Left cardiac atrium (tissue), 4 donors: ENCODE measurements at regions of chr1 and their contacts with region 1.

Region 1: GRCh38 chr1:32215629-32216480 is 6.3 kb downstream of the TMEM234 start:
- DNase-seq: peak; percentile 62
- ATAC-seq: peak; percentile 73 to 81

Region 2: GRCh38 chr1:32316903-32317277 is 101.0 kb after region 1 on chr1:
- intact Hi-C with region 1: loop called in 1 of 2 experiments (anchors 5 kb)
- DNase-seq: no peak
- ATAC-seq: no peak